Activated CD4-positive, alpha-beta memory T cell treated with anti-CD3 and anti-CD28 coated beads for 36 hours (primary cell): ENCODE measurements at regions of chr6 and their contacts with region 1.

Region 1: DNA sequence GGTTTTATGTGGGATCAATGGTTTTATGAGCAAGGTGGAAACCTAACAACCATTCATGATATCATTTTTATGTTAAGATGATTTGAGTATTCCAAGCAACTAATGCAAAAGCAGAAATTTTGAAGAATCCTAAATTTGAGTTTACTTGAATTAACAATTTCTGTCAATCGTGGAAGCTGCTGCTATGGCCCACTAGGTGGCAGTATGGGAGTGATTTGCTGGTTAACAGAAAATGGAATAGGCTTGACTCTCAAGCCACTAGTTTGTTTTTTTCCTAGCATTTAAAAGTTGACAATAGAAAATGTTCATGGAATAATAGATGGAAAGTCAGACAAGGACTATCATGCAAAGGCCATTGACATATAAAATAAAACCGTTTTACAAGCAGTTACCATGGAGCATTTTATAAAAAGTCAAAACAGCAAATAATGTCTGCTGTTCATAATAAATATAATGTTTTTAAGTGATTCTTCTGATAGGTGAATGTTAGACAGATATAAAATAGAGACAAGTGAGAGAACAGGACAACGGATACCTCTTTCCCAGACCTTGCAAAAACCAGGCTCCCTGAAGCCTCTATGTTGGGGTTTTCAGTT is 43.0 kb upstream of the TMEM200A start:
- DNase-seq: peak; percentile 59
- H3K4me3 Mint-ChIP-seq: no peak overlapping the region
- H3K27ac Mint-ChIP-seq: no peak overlapping the region
- H3K4me1 Mint-ChIP-seq: peaks cover 4% of the 10 kb centered on the region
- H3K27me3 Mint-ChIP-seq: no peaks in the 10 kb centered on the region

Region 2: GRCh38 chr6:130381459-130382380 is 58.9 kb after region 1 on chr6:
- CTCF ChIA-PET with region 1: interaction called, 4 read pairs
- POLR2A ChIA-PET with region 1: no interaction called
- intact Hi-C with region 1: loop called (anchors 5 kb)
- DNase-seq: peak; percentile 49
- H3K4me3 Mint-ChIP-seq: no peak overlapping the region
- H3K27ac Mint-ChIP-seq: no peak overlapping the region
- H3K4me1 Mint-ChIP-seq: peaks cover 19% of the 10 kb centered on the region
- H3K27me3 Mint-ChIP-seq: no peaks in the 10 kb centered on the region

Region 3: GRCh38 chr6:130760006-130760405 is 437.2 kb after region 1 on chr6:
- CTCF ChIA-PET with region 1: interaction called, 3 read pairs
- POLR2A ChIA-PET with region 1: no interaction called
- intact Hi-C with region 1: loop called (anchors 2 kb)
- DNase-seq: no peak
- H3K4me3 Mint-ChIP-seq: no peak overlapping the region
- H3K27ac Mint-ChIP-seq: no peak overlapping the region
- H3K4me1 Mint-ChIP-seq: peaks cover 4% of the 10 kb centered on the region
- H3K27me3 Mint-ChIP-seq: no peaks in the 10 kb centered on the region

Region 4: GRCh38 chr6:130843575-130844320 is 521.0 kb after region 1 on chr6:
- CTCF ChIA-PET with region 1: interaction called, 12 read pairs
- POLR2A ChIA-PET with region 1: no interaction called
- intact Hi-C with region 1: loop called (anchors 1 kb)
- DNase-seq: no peak
- H3K4me3 Mint-ChIP-seq: no peak overlapping the region
- H3K27ac Mint-ChIP-seq: no peak overlapping the region
- H3K4me1 Mint-ChIP-seq: peaks cover 2% of the 10 kb centered on the region
- H3K27me3 Mint-ChIP-seq: no peaks in the 10 kb centered on the region

Region 5: DNA sequence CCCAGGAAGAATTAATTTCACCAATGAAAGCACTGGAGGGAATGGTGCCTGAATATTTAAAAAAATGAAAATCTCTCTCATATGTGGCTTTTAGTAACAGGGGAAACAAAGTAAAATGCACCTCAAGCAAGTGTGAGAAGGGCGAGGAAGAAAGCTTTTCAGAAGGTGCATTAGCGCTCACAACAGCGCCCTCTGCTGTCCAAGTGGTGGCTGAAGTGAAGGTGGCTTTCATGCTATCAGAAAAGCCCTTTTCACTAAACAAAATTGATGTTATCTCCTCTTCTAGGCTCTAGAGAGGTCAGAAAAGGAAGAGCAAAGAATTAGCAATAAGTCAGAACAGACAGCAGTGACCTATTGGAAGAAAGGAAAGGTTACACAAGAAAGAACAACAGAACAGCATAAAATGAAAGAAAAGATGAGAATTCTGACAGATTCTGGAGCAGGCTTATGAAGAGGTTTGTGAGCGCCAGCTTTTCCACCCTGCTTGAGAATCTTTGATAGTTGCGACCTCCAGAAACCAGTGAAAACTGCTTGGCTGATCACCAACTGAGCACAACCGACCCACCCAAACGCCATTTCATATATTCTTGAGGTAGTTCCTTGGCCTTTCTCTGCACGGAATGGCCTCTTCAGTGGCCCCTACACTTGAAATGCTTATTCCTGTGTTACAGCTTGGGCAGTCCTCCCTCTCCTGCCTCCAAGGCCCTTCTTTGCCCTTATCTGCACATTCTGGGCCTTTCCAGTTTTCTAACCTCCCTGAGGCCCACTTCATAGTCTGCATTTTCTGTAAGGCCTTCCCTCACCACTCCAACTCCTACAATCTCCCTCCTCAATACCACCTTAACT is 549.7 kb after region 1 on chr6:
- CTCF ChIA-PET with region 1: interaction called, 4 read pairs
- POLR2A ChIA-PET with region 1: no interaction called
- intact Hi-C with region 1: loop called (anchors 1 kb)
- DNase-seq: peak; percentile 79
- H3K4me3 Mint-ChIP-seq: no peak overlapping the region
- H3K27ac Mint-ChIP-seq: no peak overlapping the region
- H3K4me1 Mint-ChIP-seq: no peaks in the 10 kb centered on the region
- H3K27me3 Mint-ChIP-seq: no peaks in the 10 kb centered on the region